IMR-90 (cell line): ENCODE measurements at regions of chr6 and their contacts with region 1.

Region 1: GRCh38 chr6:33391278-33391921 is at the start of gene KIFC1:
- DNase-seq: peak; percentile 100
- ATAC-seq: peak; percentile 95
- H3K4me3 ChIP-seq: peak within 1 kb of the TSS; percentile 58
- H3K27ac ChIP-seq: peak within 1 kb of the TSS; percentile 48
- H3K4me1 ChIP-seq: no peaks in the 10 kb centered on the region
- H3K27me3 ChIP-seq: no peaks in the 10 kb centered on the region
- CTCF ChIP-seq: peak; percentile 99
- POLR2A ChIP-seq: no peak
- RAD21 ChIP-seq: peak; percentile 68
- total RNA-seq, gene KIFC1: 33.9 and 35.3 TPM in 2 replicates

Region 2: DNA sequence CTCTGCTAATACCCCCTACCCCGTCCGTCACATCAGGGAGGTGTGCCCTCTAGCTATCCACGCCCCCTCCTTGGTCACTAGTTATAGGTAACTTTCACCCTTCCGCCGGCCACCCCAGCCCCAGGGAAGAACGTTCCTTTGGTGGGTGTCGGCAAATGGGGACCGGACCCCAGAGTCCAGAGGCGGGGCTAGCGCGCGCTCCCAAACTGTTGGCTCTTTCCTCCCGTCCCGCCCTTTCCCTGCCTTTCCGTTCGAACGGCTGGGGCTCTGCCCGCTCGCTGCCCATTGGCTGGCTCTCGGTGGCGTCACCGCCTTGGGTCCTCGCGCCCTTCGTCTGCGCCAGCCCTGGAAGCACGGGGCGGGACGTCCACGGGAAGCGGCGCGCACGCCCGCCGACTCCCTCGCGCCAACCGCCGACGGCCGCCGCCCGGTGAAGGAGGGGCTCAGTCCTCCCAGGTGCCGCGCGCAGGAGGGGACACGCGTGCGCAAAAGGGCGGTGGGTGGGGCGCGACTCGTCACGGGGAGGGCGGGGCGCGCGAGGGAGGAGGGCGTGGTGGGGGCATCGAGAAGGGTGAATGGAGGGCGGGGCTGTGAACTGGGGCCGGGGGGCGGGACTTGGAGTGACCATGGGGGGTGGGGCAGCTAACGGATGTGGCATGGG is 18.8 kb after region 1 on chr6:
- CTCF ChIA-PET with region 1: interaction called, 4 read pairs
- POLR2A ChIA-PET with region 1: no interaction called
- dilution Hi-C with region 1: no loop called
- in situ Hi-C with region 1: no loop called
- intact Hi-C with region 1: loop called (anchors 1 kb)
- DNase-seq: peak; percentile 97
- ATAC-seq: peak; percentile 84
- H3K4me3 ChIP-seq: peak overlapping the region; percentile 92
- H3K27ac ChIP-seq: peak overlapping the region; percentile 100
- H3K4me1 ChIP-seq: no peaks in the 10 kb centered on the region; the same call in 1 of the 2 replicates
- H3K27me3 ChIP-seq: no peaks in the 10 kb centered on the region
- CTCF ChIP-seq: no peak
- POLR2A ChIP-seq: peak; percentile 69; the same call in 1 of the 2 replicates
- RAD21 ChIP-seq: no peak

Region 3: DNA sequence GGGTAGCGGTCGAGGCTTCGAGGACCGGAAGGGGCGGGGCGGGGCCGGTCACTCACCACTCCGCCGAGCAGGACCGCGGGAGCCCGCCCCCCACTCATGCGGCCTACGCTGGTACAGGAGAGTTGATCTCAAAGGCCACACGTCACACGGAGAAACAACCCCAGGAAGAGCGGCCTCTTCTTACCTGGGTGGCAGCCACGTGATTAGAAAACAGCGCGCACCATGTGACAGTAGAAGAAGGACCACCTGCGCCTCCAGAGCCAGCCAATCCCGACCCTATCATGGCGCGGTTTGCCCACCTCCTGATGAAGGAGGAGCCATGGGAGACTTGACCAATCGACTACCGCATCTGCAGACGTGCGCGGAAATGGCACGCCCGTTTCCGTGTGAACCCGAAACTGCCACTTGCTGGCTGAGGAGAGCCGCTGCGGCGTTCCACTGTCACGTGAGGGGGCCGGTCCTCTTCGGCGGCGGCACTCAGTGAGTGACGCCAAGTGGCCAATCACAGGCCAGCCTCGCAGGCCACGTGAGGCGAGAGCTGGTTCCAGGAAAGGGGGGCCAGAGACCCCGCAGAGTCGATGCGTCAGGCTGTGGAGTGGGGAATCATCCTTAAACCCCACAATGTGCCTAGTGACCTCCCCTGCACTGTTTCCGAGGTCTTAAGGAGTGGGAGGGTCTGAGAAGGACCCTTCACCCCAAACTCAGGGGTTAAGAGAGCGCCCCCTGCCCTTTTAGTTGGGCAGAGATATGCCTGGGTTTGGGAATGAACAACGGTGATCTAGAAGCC is 26.7 kb after region 1 on chr6 and contains the start of gene CUTA:
- CTCF ChIA-PET with region 1: interaction called, 3 read pairs
- POLR2A ChIA-PET with region 1: no interaction called
- dilution Hi-C with region 1: no loop called
- in situ Hi-C with region 1: no loop called
- intact Hi-C with region 1: loop called (anchors 2 kb)
- DNase-seq: peak; percentile 100
- ATAC-seq: peak; percentile 83
- H3K4me3 ChIP-seq: peak within 1 kb of the TSS; percentile 63
- H3K27ac ChIP-seq: peak within 1 kb of the TSS; percentile 98
- H3K4me1 ChIP-seq: peaks cover 19% of the 10 kb centered on the region
- H3K27me3 ChIP-seq: no peaks in the 10 kb centered on the region
- CTCF ChIP-seq: peak; percentile 20; the same call in 1 of the 2 replicates
- POLR2A ChIP-seq: no peak; the same call in 1 of the 2 replicates
- RAD21 ChIP-seq: no peak
- total RNA-seq, gene CUTA: 122 and 136 TPM in 2 replicates

Region 4: DNA sequence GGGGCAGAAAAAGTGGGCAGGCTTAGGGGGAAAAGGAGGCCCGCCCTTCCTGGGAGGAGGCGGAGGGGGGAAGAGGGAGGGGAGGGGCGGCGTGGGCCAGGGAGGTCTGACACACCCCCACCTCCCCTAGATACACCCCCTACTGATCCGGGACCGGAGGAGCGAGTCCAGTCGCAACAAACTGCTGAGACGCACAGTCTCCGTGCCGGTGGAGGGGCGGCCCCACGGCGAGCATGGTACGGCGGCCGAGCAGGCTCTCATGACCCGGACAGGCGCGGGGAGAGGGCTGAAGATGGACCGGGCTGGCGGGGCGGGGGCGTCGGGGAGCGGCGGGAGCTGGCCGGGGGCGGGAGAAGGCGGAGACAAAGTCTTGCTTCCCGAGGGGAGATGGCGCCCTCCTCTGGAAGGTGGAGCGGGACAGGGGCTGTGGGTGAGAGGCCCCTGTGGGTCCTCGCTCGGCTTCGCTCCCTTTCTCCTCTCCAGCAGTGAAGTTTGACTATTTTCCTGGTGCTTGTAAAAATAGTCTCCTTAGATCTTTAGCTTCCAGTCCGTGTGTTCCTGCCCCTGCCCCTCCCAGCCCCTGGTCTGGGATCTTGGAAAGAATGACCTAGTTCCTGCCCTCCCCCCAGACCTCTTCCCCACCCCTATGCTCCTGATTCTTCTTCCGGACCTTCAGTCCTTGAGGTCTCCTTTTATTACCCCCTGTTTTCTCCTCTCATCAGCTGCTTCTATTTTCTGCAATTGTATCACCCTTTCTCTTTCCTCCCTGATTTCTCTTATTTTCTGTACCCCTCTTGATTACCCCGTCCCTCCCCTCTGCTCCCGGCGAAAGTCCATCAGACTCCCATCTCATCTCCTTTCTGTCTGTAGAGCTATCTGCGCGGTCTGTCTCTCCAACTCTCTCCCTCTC is 34.5 kb after region 1 on chr6:
- CTCF ChIA-PET with region 1: interaction called, 3 read pairs
- POLR2A ChIA-PET with region 1: no interaction called
- dilution Hi-C with region 1: no loop called
- in situ Hi-C with region 1: no loop called
- intact Hi-C with region 1: loop called (anchors 1 kb)
- DNase-seq: peak; percentile 75
- ATAC-seq: peak; percentile 73
- H3K4me3 ChIP-seq: peak overlapping the region; percentile 56
- H3K27ac ChIP-seq: peak overlapping the region; percentile 91
- H3K4me1 ChIP-seq: peaks cover 35% of the 10 kb centered on the region
- H3K27me3 ChIP-seq: no peaks in the 10 kb centered on the region
- CTCF ChIP-seq: peak; percentile 68
- POLR2A ChIP-seq: peak; percentile 47; the same call in 1 of the 2 replicates
- RAD21 ChIP-seq: peak; percentile 78